ENCODE measurements at regions of chr21 and their contacts with region 1.

Region 1: GRCh38 chr21:46323227-46324128 is at the start of gene C21orf58:
- DNase-seq: peak; percentile 97
- H3K4me3 ChIP-seq: peak within 1 kb of the TSS; percentile 84 to 96 (median 94)
- H3K27ac ChIP-seq: peak within 1 kb of the TSS; percentile 91
- H3K4me1 ChIP-seq: peaks cover 19% of the 10 kb centered on the region
- H3K27me3 ChIP-seq: no peaks in the 10 kb centered on the region
- CTCF ChIP-seq: no peak
- total RNA-seq, gene C21orf58: 1.8 to 13.8 TPM

Region 2: DNA sequence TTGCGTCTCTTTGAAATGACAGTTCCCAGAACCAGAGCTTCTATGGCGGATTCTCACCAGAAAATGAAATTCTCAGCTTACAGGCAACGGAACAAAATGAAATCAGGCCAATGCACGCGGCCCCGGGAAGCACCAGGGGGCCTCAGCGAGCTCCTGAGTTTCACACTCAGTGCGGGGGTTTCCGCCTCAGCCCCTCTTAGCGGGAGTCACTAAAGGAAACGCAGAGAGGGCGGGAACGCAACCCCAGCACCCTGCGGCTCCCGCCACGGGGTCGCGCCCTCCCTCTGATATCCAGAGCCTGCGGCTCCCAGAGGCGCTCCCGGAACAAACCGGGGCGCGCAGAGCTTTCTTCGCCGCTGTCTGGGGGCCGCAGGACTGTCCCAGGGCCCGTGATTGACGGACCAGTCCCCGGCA is 349.8 kb before region 1 on chr21:
- CTCF ChIA-PET with region 1: no interaction called
- dilution Hi-C with region 1: no loop called
- in situ Hi-C with region 1: no loop called
- intact Hi-C with region 1: loop called (anchors 5 kb)
- DNase-seq: peak; percentile 24
- H3K4me3 ChIP-seq: peak overlapping the region; percentile 31 to 47 (median 46)
- H3K27ac ChIP-seq: no peak overlapping the region
- H3K4me1 ChIP-seq: peaks cover 26% of the 10 kb centered on the region
- H3K27me3 ChIP-seq: peaks cover 2% of the 10 kb centered on the region
- CTCF ChIP-seq: peak; percentile 63 to 75

Region 3: GRCh38 chr21:46116776-46117585 is 206.5 kb before region 1 on chr21:
- CTCF ChIA-PET with region 1: no interaction called
- dilution Hi-C with region 1: no loop called
- in situ Hi-C with region 1: no loop called
- intact Hi-C with region 1: no loop called
- DNase-seq: peak; percentile 48
- H3K4me3 ChIP-seq: no peak overlapping the region
- H3K27ac ChIP-seq: no peak overlapping the region
- H3K4me1 ChIP-seq: peaks cover 5% of the 10 kb centered on the region
- H3K27me3 ChIP-seq: no peaks in the 10 kb centered on the region
- CTCF ChIP-seq: no peak

Region 4: DNA sequence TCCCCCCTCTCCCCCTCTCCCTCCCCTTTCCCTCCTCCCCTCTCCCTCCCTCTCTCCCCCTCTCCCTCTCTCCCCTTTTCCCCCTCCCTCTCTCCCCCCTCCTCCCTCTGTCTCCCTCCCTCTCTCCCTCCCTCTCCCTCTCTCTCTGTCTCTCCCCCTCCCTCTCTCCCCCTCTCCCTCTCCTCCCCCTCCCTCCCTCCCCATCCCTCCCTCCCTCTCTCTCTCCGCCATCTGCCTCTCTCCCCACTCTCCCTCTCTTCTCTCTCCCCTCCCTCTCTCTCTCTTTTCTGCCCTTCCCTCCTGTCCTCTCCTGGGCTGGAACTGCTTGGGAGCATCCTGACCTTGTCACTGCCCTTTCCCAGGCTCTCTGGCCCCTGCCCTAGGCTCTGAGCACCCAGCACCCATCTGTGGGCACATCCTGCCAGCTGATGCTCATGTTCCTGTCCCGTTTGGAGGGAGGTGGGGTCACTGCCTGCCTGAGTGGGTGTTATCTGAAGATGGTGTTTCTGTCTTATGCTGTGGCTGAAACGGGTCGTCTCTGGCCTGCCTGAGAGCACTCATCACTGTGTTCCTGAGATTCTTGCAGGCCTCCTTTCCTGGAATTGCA is 178.9 kb before region 1 on chr21:
- CTCF ChIA-PET with region 1: no interaction called
- dilution Hi-C with region 1: no loop called
- in situ Hi-C with region 1: no loop called
- intact Hi-C with region 1: loop called (anchors 1 kb)
- DNase-seq: no peak
- H3K4me3 ChIP-seq: no peak overlapping the region
- H3K27ac ChIP-seq: no peak overlapping the region
- H3K4me1 ChIP-seq: peaks cover 4% of the 10 kb centered on the region
- H3K27me3 ChIP-seq: no peaks in the 10 kb centered on the region
- CTCF ChIP-seq: no peak

Region 5: GRCh38 chr21:46243960-46244361 is 79.5 kb before region 1 on chr21:
- CTCF ChIA-PET with region 1: no interaction called
- dilution Hi-C with region 1: loop called (anchors 5 kb)
- in situ Hi-C with region 1: no loop called
- intact Hi-C with region 1: no loop called
- DNase-seq: no peak
- H3K4me3 ChIP-seq: no peak overlapping the region
- H3K27ac ChIP-seq: no peak overlapping the region
- H3K4me1 ChIP-seq: no peaks in the 10 kb centered on the region
- H3K27me3 ChIP-seq: no peaks in the 10 kb centered on the region
- CTCF ChIP-seq: no peak

Region 6: DNA sequence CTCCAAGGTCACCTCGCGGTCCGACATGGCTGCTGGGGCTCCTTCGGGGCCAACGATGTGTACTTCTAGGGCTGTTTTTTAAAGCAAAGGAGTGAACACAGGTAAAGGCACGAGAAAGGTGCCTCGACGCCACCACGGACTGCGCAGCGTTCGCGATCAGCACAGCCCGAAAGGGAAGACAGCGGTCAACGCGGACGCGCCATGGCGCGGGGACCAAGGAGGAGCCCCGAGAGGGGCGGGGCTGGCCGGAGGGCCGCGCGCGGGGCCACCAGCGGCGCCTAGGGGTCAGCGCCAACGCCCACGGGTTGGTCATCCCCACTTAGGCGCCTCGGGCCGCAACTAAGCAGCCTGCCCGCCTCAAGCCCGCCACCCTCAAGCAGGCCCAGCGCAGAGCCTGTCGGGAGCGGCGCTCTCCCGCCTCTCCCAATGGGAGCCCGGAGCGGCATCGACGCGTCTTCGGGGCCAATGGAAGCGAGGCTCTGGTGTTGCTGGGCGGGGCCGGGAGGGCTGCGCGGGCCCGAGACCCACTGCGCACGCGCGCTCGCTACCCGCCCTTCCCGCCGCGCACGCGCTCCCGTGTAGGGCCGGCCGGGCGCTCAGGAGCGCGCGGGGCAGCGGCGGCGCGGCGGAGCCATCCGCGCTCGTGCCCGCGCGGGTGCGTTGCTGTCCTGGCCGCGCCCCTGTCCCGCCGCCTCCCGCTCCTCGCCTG is 135.0 kb after region 1 on chr21 and contains the start of gene DIP2A:
- CTCF ChIA-PET with region 1: no interaction called
- dilution Hi-C with region 1: no loop called
- in situ Hi-C with region 1: no loop called
- intact Hi-C with region 1: loop called (anchors 5 kb)
- DNase-seq: peak; percentile 97
- H3K4me3 ChIP-seq: peak within 1 kb of the TSS; percentile 80 to 91 (median 84)
- H3K27ac ChIP-seq: peak within 1 kb of the TSS; percentile 96
- H3K4me1 ChIP-seq: peaks cover 37% of the 10 kb centered on the region
- H3K27me3 ChIP-seq: no peaks in the 10 kb centered on the region
- CTCF ChIP-seq: no peak
- total RNA-seq, gene DIP2A: 49.5 to 51.3 TPM

Measured in mammary epithelial cell (primary cell).